ENCODE measurements at regions of chr9 and their contacts with region 1.

Region 1: GRCh38 chr9:93962561-93963440 is 7.6 kb upstream of the BARX1 start:
- DNase-seq: peak; percentile 46
- ATAC-seq: peak; percentile 90
- H3K4me3 ChIP-seq: no peak overlapping the region
- H3K27ac ChIP-seq: no peak overlapping the region
- H3K4me1 ChIP-seq: no peaks in the 10 kb centered on the region; the same call in none of the 2 replicates
- H3K27me3 ChIP-seq: no peaks in the 10 kb centered on the region
- CTCF ChIP-seq: peak; percentile 80

Region 2: DNA sequence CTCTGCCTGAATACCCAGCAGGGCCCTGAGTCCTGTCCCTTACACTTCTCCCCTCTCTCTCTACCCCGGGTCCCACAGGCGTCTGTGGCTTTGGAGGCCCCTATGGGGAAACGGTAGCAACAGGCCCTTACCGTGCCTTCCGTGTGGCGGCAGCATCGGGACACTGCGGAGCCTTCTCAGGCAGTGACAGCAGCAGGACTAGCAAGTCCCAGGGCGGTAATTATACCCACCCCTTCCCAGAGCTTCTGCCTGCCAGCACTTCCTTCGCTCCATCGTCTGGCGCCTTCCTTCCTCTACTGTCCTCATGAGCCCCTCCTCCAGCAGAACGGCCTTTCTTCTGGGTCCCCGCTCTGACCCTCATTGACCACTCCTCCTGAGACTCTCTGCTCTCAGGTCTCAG is 404.3 kb before region 1 on chr9:
- CTCF ChIA-PET with region 1: no interaction called
- POLR2A ChIA-PET with region 1: no interaction called
- in situ Hi-C with region 1: no loop called
- intact Hi-C with region 1: no loop called
- DNase-seq: no peak
- ATAC-seq: no peak
- H3K4me3 ChIP-seq: no peak overlapping the region
- H3K27ac ChIP-seq: no peak overlapping the region
- H3K4me1 ChIP-seq: no peaks in the 10 kb centered on the region
- H3K27me3 ChIP-seq: no peaks in the 10 kb centered on the region
- CTCF ChIP-seq: no peak

Region 3: GRCh38 chr9:93682232-93682968 is 280.4 kb before region 1 on chr9:
- CTCF ChIA-PET with region 1: interaction called, 3 read pairs
- POLR2A ChIA-PET with region 1: no interaction called
- in situ Hi-C with region 1: no loop called
- intact Hi-C with region 1: loop called (anchors 2 kb)
- DNase-seq: no peak
- ATAC-seq: peak; percentile 79
- H3K4me3 ChIP-seq: no peak overlapping the region
- H3K27ac ChIP-seq: no peak overlapping the region
- H3K4me1 ChIP-seq: no peaks in the 10 kb centered on the region
- H3K27me3 ChIP-seq: no peaks in the 10 kb centered on the region
- CTCF ChIP-seq: peak; percentile 84

Region 4: GRCh38 chr9:93827545-93828330 is 135.1 kb before region 1 on chr9:
- CTCF ChIA-PET with region 1: interaction called, 3 read pairs
- POLR2A ChIA-PET with region 1: no interaction called
- in situ Hi-C with region 1: no loop called
- intact Hi-C with region 1: loop called (anchors 5 kb)
- DNase-seq: no peak
- ATAC-seq: peak; percentile 98
- H3K4me3 ChIP-seq: peak overlapping the region in 1 of 2 experiments; percentile 38; a peak in 3 of 4 replicates
- H3K27ac ChIP-seq: no peak overlapping the region
- H3K4me1 ChIP-seq: no peaks in the 10 kb centered on the region
- H3K27me3 ChIP-seq: no peaks in the 10 kb centered on the region
- CTCF ChIP-seq: peak; percentile 92